SK-N-SH (cell line): ENCODE measurements at regions of chr7 and their contacts with region 1.

Region 1: GRCh38 chr7:120792091-120792860 is 65.7 kb downstream of the TSPAN12 start:
- DNase-seq: peak; percentile 73
- H3K4me3 ChIP-seq: no peak overlapping the region; a peak in 1 of 4 replicates
- H3K27ac ChIP-seq: no peak overlapping the region
- H3K4me1 ChIP-seq: peaks cover 0 to 2% of the 10 kb centered on the region in 2 experiments; a peak in 1 of 4 replicates
- H3K27me3 ChIP-seq: peaks cover 15% of the 10 kb centered on the region; the same call in 1 of the 2 replicates
- CTCF ChIP-seq: peak; percentile 99
- EP300 ChIP-seq: no peak
- RAD21 ChIP-seq: peak; percentile 75

Region 2: GRCh38 chr7:120645966-120646365 is 146.3 kb before region 1 on chr7:
- CTCF ChIA-PET with region 1: no interaction called
- POLR2A ChIA-PET with region 1: no interaction called
- DNase-seq: no peak
- H3K4me3 ChIP-seq: no peak overlapping the region
- H3K27ac ChIP-seq: no peak overlapping the region
- H3K4me1 ChIP-seq: no peaks in the 10 kb centered on the region
- H3K27me3 ChIP-seq: no peaks in the 10 kb centered on the region
- CTCF ChIP-seq: no peak
- EP300 ChIP-seq: no peak
- RAD21 ChIP-seq: no peak

Region 3: DNA sequence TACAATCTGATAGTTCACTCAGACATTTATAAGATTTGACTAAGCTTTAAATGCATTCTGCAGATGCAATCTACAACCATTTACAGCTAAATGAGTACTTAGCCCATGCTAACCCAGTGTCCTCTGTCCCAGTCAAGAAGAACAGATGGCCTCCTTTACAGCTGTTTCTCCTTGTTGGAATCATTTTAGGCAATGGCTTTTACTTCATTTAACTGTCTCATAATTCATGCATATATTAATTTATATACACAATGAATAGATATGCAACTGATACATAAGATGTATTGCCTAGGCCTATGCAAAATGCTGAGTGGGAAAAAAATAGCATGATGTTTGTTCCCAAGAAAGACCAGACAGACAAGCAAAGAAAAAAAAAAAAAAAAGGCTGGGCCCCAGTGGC is 16.5 kb before region 1 on chr7:
- CTCF ChIA-PET with region 1: interaction called, 17 read pairs
- POLR2A ChIA-PET with region 1: no interaction called
- DNase-seq: peak; percentile 38
- H3K4me3 ChIP-seq: no peak overlapping the region
- H3K27ac ChIP-seq: no peak overlapping the region
- H3K4me1 ChIP-seq: no peaks in the 10 kb centered on the region; a peak in 1 of 4 replicates
- H3K27me3 ChIP-seq: peaks cover 10% of the 10 kb centered on the region; the same call in 1 of the 2 replicates
- CTCF ChIP-seq: no peak
- EP300 ChIP-seq: peak in 1 of 2 experiments; percentile 75; a peak in 2 of 4 replicates
- RAD21 ChIP-seq: no peak

Region 4: DNA sequence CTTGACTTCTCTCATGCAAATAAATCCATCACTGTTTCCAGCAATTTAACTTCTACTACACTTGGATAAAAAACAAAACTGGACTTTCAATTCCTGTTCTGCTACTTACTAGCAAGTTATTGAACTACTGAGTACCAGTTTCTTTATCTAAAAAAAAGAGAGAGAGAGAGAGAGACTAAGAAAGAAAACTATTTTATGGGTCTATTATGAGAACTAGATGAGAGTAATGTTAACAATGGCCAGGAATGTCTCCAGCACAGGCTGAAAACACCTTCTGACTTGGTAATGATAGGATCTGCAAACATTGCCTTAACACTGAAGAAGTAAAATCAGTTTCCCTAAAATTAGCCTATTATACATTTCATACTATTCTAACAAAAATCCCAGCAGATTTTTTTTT is 60.4 kb after region 1 on chr7:
- CTCF ChIA-PET with region 1: interaction called, 13 read pairs
- POLR2A ChIA-PET with region 1: no interaction called
- DNase-seq: no peak
- H3K4me3 ChIP-seq: no peak overlapping the region
- H3K27ac ChIP-seq: no peak overlapping the region
- H3K4me1 ChIP-seq: peaks cover 0 to 8% of the 10 kb centered on the region in 2 experiments; a peak in 2 of 4 replicates
- H3K27me3 ChIP-seq: peaks cover 26% of the 10 kb centered on the region
- CTCF ChIP-seq: no peak
- EP300 ChIP-seq: no peak
- RAD21 ChIP-seq: no peak

Region 5: DNA sequence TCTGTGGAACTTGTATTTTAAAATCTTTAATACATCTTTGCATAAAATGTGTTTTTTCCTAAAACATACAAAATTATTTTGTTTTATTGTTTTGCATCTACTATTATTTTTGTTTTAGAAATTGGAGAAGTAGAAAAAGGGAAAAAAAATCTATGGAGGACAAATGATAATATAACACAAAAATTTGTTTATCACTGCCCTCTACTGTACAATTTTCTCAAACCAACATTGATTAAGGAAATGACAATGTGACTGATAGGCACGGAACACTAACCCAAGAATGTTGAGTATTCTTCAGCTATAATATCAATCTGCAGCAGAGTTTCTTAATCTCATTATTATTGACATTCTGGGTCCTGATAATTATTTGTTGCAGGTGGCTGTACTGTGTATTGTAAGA is 148.8 kb after region 1 on chr7:
- CTCF ChIA-PET with region 1: interaction called, 18 read pairs
- POLR2A ChIA-PET with region 1: no interaction called
- DNase-seq: no peak
- H3K4me3 ChIP-seq: no peak overlapping the region
- H3K27ac ChIP-seq: no peak overlapping the region
- H3K4me1 ChIP-seq: no peaks in the 10 kb centered on the region; a peak in 1 of 4 replicates
- H3K27me3 ChIP-seq: peaks cover 11% of the 10 kb centered on the region; the same call in 1 of the 2 replicates
- CTCF ChIP-seq: peak; percentile 56
- EP300 ChIP-seq: no peak
- RAD21 ChIP-seq: peak; percentile 65

Region 6: GRCh38 chr7:121099572-121099971 is 307.3 kb after region 1 on chr7:
- CTCF ChIA-PET with region 1: interaction called, 30 read pairs
- POLR2A ChIA-PET with region 1: no interaction called
- DNase-seq: no peak
- H3K4me3 ChIP-seq: no peak overlapping the region
- H3K27ac ChIP-seq: no peak overlapping the region
- H3K4me1 ChIP-seq: peaks cover 0 to 3% of the 10 kb centered on the region in 2 experiments; a peak in 2 of 4 replicates
- H3K27me3 ChIP-seq: no peaks in the 10 kb centered on the region
- CTCF ChIP-seq: peak; percentile 34; the same call in 1 of the 2 replicates
- EP300 ChIP-seq: no peak
- RAD21 ChIP-seq: peak; percentile 12; the same call in 1 of the 2 replicates